IMR-90 (cell line): ENCODE measurements at regions of chrX and their contacts with region 1.

Region 1: GRCh38 chrX:8010105-8010504 is 82.9 kb upstream of the PNPLA4 start:
- DNase-seq: no peak
- ATAC-seq: no peak
- H3K4me3 ChIP-seq: no peak overlapping the region
- H3K27ac ChIP-seq: no peak overlapping the region
- H3K4me1 ChIP-seq: no peaks in the 10 kb centered on the region
- H3K27me3 ChIP-seq: no peaks in the 10 kb centered on the region
- CTCF ChIP-seq: no peak
- POLR2A ChIP-seq: no peak
- RAD21 ChIP-seq: no peak

Region 2: DNA sequence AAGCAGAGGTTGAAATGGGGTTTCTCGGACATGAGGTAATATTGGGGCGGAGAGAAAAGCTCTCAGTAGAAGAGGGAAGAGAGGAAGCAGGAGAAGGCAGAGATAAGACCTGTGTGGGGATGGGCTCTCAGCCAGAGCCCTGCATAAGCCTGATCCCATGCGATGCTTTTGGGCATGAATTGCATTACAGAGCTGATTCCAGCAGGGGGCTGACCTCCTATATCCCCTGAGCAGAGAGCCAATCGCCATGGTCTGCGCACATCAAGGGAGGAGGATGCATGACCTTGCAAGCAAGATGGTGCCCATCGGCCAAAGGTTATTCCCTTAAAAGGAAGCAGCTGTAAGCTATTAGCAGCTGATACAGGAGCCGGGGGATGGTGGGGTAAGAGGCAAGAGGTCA is 714.2 kb after region 1 on chrX:
- CTCF ChIA-PET with region 1: no interaction called
- POLR2A ChIA-PET with region 1: no interaction called
- dilution Hi-C with region 1: no loop called
- in situ Hi-C with region 1: loop called (anchors 10 kb)
- intact Hi-C with region 1: no loop called
- DNase-seq: no peak
- ATAC-seq: no peak
- H3K4me3 ChIP-seq: no peak overlapping the region
- H3K27ac ChIP-seq: no peak overlapping the region
- H3K4me1 ChIP-seq: no peaks in the 10 kb centered on the region
- H3K27me3 ChIP-seq: peaks cover 4% of the 10 kb centered on the region
- CTCF ChIP-seq: no peak
- POLR2A ChIP-seq: no peak
- RAD21 ChIP-seq: no peak

Region 3: DNA sequence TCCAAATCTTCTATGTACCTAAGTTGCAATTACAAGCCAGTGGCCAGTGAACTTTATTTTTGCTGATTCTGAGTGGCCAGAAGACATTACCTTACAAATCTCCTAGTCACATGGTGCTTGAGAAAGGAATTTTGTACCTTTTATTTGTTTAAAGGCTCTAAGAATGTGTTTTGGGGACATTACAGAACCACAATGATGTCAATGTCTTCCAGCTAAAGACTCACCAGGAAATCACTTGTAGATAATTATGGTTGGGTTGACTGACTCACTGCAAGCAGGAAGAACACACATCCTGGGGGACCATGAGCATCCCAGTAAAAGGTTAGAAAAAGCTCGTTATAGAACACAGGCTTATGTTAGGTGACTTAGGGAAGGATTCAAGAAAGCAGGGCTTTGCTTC is 1143.2 kb after region 1 on chrX:
- CTCF ChIA-PET with region 1: no interaction called
- POLR2A ChIA-PET with region 1: no interaction called
- dilution Hi-C with region 1: no loop called
- in situ Hi-C with region 1: no loop called
- intact Hi-C with region 1: no loop called
- DNase-seq: peak; percentile 65
- ATAC-seq: no peak
- H3K4me3 ChIP-seq: no peak overlapping the region
- H3K27ac ChIP-seq: peak overlapping the region; percentile 16; the same call in 1 of the 2 replicates
- H3K4me1 ChIP-seq: peaks cover 3% of the 10 kb centered on the region
- H3K27me3 ChIP-seq: no peaks in the 10 kb centered on the region
- CTCF ChIP-seq: no peak
- POLR2A ChIP-seq: no peak
- RAD21 ChIP-seq: no peak